Activated T-helper 1 cell treated with anti-CD3 and anti-CD28 coated beads, Interleukin-12 subunit alpha, Interleukin-12 subunit beta, Interleukin-2, Interleukin-4 antibody, amounts not matched to agents 30 ng/mL and 10 ng/mL and 1 ng/mL, durations not matched to agents 14 hours and 24 hours and 36 hours (primary cell): ENCODE measurements at regions of chr12 and their contacts with region 1.

Region 1: GRCh38 chr12:122225683-122226407 is at the start of gene DIABLO:
- DNase-seq: peak; percentile 100
- H3K4me3 Mint-ChIP-seq: peak within 1 kb of the TSS; percentile 91
- H3K27ac Mint-ChIP-seq: peak within 1 kb of the TSS; percentile 90
- H3K4me1 Mint-ChIP-seq: peaks cover 32% of the 10 kb centered on the region
- H3K27me3 Mint-ChIP-seq: no peaks in the 10 kb centered on the region
- total RNA-seq, gene DIABLO: 58.1 and 59.2 TPM in 2 replicates

Region 2: DNA sequence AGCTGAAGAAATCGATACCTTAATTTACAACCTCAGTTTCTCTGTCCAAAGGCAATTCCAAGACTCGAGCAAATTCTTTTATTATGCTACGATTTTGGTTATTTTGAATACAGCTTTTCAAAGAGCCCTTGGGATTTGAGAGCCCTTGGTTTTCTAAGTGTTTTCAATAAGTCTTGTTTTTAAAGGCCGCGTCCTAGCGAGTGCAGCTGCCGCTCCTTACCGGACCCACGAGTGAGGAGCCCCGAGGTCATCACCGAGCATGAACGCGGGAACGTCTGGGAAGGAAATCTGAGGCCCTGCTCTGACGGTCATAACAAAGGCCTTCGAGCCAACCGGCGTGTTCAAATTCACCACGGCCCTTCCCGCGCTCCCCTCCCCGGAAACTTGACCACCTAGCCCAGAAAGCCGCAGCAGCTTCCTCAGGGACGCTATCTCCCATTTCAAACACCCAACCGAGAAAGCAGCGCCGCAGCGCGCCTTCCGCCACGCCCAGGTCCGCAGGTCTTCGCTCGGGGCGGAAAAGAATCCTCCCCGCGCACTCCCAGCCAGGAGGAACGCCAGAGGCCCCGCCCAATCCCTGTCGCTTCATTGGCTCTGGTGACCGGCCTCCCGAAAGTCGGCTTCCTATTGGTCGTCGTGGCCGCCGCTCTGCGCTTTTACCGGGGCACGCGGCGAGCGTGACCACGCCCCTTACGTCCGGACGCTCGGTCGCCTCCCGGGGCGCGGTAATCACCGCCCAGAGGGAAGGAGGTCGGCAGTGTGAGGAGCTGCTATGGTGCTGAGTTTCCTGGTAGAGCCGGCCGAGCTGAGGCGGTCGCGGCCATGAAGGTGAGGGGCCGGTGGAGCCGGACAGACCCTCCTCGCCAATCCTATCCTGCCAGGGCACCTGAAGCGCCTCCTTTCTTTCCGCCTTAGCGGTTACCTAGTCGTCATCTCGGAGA is 826.2 kb before region 1 on chr12 and contains the start of gene RNF34:
- intact Hi-C with region 1: loop called (anchors 2 kb)
- DNase-seq: peak; percentile 98
- H3K4me3 Mint-ChIP-seq: peak within 1 kb of the TSS; percentile 92
- H3K27ac Mint-ChIP-seq: peak within 1 kb of the TSS; percentile 94
- H3K4me1 Mint-ChIP-seq: peaks cover 31% of the 10 kb centered on the region
- H3K27me3 Mint-ChIP-seq: no peaks in the 10 kb centered on the region
- total RNA-seq, gene RNF34: 80.6 and 83.7 TPM in 2 replicates

Region 3: DNA sequence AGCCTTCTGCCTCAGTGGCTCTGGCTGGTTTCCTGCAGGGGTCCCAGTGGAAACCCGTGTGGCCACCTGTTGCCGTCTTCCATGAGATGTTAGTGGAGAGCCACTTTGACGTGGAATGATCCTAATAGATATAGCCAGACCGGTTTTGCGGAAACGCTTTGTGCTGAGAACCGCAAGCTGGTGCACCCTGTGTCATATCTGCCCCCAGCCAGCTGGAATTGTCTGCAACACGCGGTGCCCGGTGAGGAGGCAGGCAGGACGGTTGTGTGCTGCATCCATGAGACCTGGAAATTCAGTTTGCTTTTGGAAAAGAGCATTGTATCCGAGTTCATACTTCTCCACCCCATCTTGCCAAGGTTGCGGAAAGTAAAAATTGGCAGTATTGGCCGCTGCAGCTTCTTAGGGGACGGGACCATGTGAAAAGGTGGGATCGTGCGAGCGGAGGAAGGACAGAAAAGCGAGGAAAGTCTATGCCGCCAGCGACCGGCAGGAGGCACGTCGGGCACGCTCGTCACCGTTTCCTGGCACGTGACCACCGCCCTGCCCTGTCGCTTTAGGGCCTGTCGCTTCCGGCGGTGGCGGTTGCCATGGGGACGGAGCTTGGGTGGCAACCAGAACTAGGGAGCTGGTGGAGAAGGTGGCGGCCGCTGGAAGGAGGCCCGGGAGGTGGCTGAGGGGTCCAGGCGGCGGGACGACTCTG is 307.7 kb before region 1 on chr12 and contains the start of gene CFAP251:
- intact Hi-C with region 1: loop called (anchors 1 kb)
- DNase-seq: peak; percentile 92
- H3K4me3 Mint-ChIP-seq: peak within 1 kb of the TSS; percentile 80
- H3K27ac Mint-ChIP-seq: peak within 1 kb of the TSS; percentile 71
- H3K4me1 Mint-ChIP-seq: peaks cover 15% of the 10 kb centered on the region
- H3K27me3 Mint-ChIP-seq: peaks cover 2% of the 10 kb centered on the region
- total RNA-seq, gene CFAP251: 0.65 and 0.76 TPM in 2 replicates

Region 4: GRCh38 chr12:122203301-122204166 is 22.3 kb before region 1 on chr12 and contains the start of gene B3GNT4:
- intact Hi-C with region 1: loop called (anchors 1 kb)
- DNase-seq: peak; percentile 45
- H3K4me3 Mint-ChIP-seq: peak within 1 kb of the TSS; percentile 82
- H3K27ac Mint-ChIP-seq: peak within 1 kb of the TSS; percentile 40
- H3K4me1 Mint-ChIP-seq: no peaks in the 10 kb centered on the region
- H3K27me3 Mint-ChIP-seq: peaks cover 23% of the 10 kb centered on the region
- total RNA-seq, gene B3GNT4: 0.29 TPM in 2 replicates

Region 5: DNA sequence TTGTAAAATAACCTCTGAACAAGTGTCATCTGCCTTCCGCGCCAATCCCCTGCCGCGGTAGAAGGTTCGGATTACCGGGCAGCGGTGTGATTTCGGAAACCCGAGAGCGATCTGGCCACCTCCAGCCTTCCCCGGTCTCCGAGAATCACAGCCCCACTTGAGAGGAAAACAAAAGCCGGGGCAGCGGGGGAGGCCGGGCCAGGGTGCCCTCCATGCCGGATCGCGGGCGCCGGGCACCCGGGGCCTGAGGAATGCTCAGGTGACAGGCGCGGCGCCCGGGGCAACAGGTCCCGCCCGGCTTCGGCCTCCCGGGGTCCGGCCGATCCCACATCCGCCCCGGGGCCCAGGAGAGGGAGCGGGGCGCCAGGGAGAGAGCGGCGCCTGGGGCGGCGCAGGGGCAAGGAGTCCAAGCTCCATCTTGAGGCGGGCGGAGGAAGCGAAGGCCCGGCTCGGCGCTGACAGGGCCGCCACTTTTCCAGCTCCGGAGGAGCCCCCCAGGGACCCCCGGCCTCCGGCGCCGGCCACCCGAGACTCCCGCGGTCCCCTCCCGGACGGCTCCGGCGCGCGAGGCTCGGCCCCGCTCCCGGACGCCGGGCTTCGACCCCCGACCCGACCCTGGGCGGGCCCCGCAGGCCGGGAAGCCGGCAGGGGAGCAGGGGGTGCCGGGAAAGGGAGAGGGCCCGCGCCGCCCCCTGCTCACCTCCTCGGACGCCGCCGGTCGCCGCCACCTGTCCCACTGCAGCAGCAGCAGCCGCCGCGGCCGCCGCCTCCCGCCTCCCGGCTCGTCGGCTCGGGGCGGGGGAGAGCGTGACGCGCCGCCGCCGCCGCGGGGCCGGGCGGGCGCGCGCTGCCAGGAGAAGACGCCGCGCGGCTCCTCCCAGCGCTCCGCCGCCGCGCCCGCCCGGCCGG is 196.2 kb after region 1 on chr12 and contains the start of gene CLIP1:
- intact Hi-C with region 1: loop called (anchors 1 kb)
- DNase-seq: peak; percentile 57
- H3K4me3 Mint-ChIP-seq: peak within 1 kb of the TSS; percentile 94
- H3K27ac Mint-ChIP-seq: peak within 1 kb of the TSS; percentile 89
- H3K4me1 Mint-ChIP-seq: peaks cover 33% of the 10 kb centered on the region
- H3K27me3 Mint-ChIP-seq: peaks cover 2% of the 10 kb centered on the region
- total RNA-seq, gene CLIP1: 64.1 and 71.9 TPM in 2 replicates

Region 6: GRCh38 chr12:122974274-122974891 is 748.5 kb after region 1 on chr12:
- intact Hi-C with region 1: loop called (anchors 2 kb)
- DNase-seq: peak; percentile 98
- H3K4me3 Mint-ChIP-seq: peak overlapping the region; percentile 98
- H3K27ac Mint-ChIP-seq: peak overlapping the region; percentile 98
- H3K4me1 Mint-ChIP-seq: peaks cover 12% of the 10 kb centered on the region
- H3K27me3 Mint-ChIP-seq: peaks cover 3% of the 10 kb centered on the region